ENCODE measurements at regions of chr15 and their contacts with region 1.

Region 1: DNA sequence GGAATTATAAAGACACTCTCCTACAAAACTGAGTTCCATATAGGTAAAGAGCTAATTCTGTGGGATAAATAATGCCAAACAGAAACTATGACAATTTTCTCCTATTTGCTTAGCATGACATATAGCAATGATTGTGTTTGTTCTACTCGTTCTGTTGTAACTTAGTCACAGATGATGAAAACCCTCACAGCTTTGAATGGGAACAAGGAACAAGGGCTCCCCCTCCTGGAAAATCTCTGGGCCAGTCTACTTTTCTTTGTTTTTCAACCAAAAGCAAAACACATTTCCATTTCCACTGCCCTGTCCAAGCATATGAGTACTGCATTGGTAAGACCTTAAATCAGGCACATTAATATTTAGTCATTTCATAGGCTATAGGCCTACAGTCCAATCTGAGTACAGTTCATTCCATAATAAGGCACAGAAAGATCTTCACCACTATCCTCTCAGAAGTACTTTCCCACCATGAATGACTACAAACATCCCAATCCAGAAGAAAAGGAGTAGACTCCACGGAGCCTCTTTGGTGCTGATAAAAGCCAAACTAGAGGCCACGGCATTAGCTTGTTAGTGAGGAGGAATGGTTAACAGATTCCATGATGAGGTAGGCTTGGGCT is 67.1 kb downstream of the ATP8B4 start:
- DNase-seq: peak; percentile 76
- H3K4me3 ChIP-seq: no peak overlapping the region
- H3K27ac ChIP-seq: peak overlapping the region in 1 of 4 donors; percentile 28
- H3K4me1 ChIP-seq: peaks cover 0 to 31% (median 15%) of the 10 kb centered on the region in 4 donors
- H3K27me3 ChIP-seq: no peaks in the 10 kb centered on the region
- CTCF ChIP-seq: peak; percentile 25 to 72 (median 48)
- EP300 ChIP-seq: no peak
- POLR2A ChIP-seq: no peak

Region 2: DNA sequence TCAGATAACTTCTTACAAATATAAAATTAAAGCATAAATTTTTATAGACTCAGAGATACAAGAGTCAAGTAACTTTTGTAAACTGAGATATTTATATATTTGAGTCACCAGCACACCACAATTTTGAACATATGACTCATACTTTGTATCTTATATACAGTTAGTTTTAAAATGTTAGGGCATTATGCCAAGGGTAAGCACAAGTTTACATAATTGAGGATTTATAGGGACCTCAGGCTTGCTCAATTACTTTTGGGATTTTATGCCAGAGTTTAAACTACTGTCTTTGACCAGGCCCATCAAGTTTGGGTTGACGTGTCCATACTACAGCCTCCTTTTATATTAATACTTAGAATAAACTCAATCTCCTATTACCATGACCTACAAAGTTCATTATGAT is 636.3 kb before region 1 on chr15:
- intact Hi-C with region 1: loop called (anchors 2 kb)
- DNase-seq: no peak
- H3K4me3 ChIP-seq: no peak overlapping the region
- H3K27ac ChIP-seq: no peak overlapping the region
- H3K4me1 ChIP-seq: peaks cover 0 to 13% (median 8%) of the 10 kb centered on the region in 4 donors
- H3K27me3 ChIP-seq: no peaks in the 10 kb centered on the region
- CTCF ChIP-seq: no peak
- EP300 ChIP-seq: no peak
- POLR2A ChIP-seq: no peak

Region 3: GRCh38 chr15:49876401-49877038 is 175.4 kb before region 1 on chr15:
- intact Hi-C with region 1: loop called (anchors 5 kb)
- DNase-seq: no peak
- H3K4me3 ChIP-seq: no peak overlapping the region
- H3K27ac ChIP-seq: peak overlapping the region; percentile 62 to 77 (median 74)
- H3K4me1 ChIP-seq: peaks cover 0 to 46% (median 42%) of the 10 kb centered on the region in 4 donors
- H3K27me3 ChIP-seq: no peaks in the 10 kb centered on the region
- CTCF ChIP-seq: peak in 2 of 4 experiments; percentile 27 to 45
- EP300 ChIP-seq: no peak
- POLR2A ChIP-seq: no peak

Region 4: DNA sequence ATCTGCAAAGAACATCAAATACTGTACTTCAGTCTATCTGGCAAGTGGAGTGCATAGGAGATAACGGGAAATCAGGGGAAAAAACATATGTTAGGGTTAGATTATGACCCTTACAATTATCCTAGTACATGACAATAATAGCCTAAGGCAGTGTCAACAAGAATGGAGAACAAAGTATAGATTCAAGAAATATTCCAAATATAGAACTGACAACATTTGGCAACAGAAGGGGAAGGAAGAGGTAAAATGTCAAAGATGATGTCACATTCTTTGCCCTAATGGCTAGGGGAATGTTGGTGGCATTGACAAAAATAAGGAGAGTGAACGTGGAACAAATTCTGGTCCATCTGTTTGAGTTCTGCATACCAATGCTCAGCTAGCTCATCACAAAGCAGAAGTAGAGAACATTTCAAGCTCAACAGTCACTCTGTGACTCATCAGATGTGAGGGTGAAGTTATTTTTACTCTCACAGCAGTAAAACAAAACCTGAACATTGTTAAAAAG is 82.7 kb after region 1 on chr15:
- intact Hi-C with region 1: loop called (anchors 5 kb)
- DNase-seq: no peak
- H3K4me3 ChIP-seq: no peak overlapping the region
- H3K27ac ChIP-seq: peak overlapping the region; percentile 33 to 86 (median 57)
- H3K4me1 ChIP-seq: peaks cover 0 to 34% (median 20%) of the 10 kb centered on the region in 4 donors
- H3K27me3 ChIP-seq: no peaks in the 10 kb centered on the region
- CTCF ChIP-seq: no peak
- EP300 ChIP-seq: no peak
- POLR2A ChIP-seq: no peak

Region 5: DNA sequence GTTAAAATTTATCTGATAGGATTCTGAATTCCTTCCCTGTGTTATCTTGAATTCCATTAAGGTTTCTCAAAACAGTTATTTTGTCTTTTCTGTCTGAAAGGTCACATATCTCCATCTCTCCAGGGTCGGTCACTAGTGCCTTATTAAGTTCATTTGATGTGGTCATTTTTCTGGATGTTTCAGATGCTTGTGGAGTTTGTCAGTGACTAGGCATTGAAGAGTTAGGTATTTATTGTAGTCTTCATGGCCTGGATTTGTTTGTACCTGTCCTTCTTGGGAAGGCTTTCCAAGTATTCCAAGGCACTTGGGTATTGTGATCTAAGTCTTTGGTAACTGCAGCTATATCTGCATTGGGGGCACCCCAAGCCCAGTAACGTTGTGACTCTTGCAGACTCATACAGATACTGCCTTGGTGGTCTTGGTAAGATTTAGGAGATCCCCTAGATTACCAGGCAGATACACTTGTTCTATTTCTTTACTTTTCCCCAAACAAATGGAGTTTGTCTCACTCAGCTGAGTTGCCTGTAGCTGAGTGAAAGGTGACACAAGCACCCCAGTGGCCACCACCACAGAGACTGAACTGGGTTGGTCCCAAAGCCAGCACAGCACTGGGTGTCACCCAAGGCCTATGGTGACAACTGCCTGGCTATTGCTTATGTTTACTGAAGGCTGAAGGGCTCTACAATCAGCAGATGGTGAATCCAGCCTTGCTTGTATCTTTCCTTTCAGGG is 111.2 kb after region 1 on chr15:
- intact Hi-C with region 1: no loop called
- DNase-seq: no peak
- H3K4me3 ChIP-seq: no peak overlapping the region
- H3K27ac ChIP-seq: no peak overlapping the region
- H3K4me1 ChIP-seq: no peaks in the 10 kb centered on the region
- H3K27me3 ChIP-seq: no peaks in the 10 kb centered on the region
- CTCF ChIP-seq: no peak
- EP300 ChIP-seq: no peak
- POLR2A ChIP-seq: no peak

Measured in sigmoid colon (tissue), 7 donors.